Endothelial cell of umbilical vein (primary cell): ENCODE measurements at regions of chr11 and their contacts with region 1.

Region 1: GRCh38 chr11:72471005-72471898 is 36.9 kb upstream of the CLPB start:
- DNase-seq: peak; percentile 72
- H3K4me3 ChIP-seq: no peak overlapping the region
- H3K27ac ChIP-seq: no peak overlapping the region
- H3K4me1 ChIP-seq: no peaks in the 10 kb centered on the region
- H3K27me3 ChIP-seq: peaks cover 18 to 31% of the 10 kb centered on the region in 2 experiments
- CTCF ChIP-seq: peak; percentile 84 to 85
- POLR2A ChIP-seq: no peak

Region 2: GRCh38 chr11:71971680-71972079 is 499.6 kb before region 1 on chr11:
- CTCF ChIA-PET with region 1: no interaction called
- POLR2A ChIA-PET with region 1: no interaction called
- dilution Hi-C with region 1: no loop called
- intact Hi-C with region 1: no loop called
- DNase-seq: no peak
- H3K4me3 ChIP-seq: no peak overlapping the region
- H3K27ac ChIP-seq: no peak overlapping the region
- H3K4me1 ChIP-seq: no peaks in the 10 kb centered on the region
- H3K27me3 ChIP-seq: no peaks in the 10 kb centered on the region
- CTCF ChIP-seq: no peak
- POLR2A ChIP-seq: no peak

Region 3: DNA sequence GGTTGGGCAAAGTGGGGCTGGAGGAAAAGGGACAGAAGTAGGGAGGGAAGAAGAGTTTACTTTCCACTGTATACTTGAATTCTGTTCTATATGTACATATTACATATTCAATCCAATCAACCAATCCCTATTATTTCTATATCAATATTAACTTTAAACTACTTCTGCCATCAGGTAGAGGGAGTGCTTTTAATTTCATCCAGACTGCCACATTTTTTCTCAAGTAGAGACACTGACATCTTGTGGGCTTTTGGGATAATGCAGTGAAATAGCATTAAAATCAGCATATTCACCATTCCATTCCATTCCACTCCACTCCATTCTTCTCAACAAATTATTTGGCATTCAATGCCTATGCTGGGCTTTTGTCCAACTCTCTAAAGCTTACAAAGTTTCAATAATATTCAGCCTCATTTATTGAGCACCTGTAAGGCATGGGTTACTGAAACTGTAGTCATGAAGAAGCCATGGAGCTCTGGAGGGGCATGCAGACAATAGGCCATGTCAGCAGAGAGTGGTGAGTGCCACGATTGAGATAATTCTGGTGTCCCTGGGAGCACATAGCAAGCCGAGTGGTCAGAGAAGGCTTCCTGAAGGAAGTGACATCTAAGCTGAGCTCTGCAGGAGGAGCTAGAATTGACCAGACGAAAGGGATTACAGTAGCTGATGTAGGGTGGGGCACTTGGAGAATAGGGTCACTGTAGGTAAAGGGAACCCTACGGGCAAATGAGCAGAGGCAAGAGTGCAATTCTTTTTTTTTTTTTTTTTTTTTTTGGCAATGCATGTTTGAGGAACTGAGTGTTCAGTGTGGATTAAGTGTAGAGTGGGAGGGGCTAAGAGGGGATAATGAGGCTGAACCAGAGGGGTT is 24.1 kb before region 1 on chr11:
- CTCF ChIA-PET with region 1: interaction called, 41 read pairs
- POLR2A ChIA-PET with region 1: no interaction called
- dilution Hi-C with region 1: no loop called
- intact Hi-C with region 1: no loop called
- DNase-seq: peak; percentile 70
- H3K4me3 ChIP-seq: no peak overlapping the region
- H3K27ac ChIP-seq: no peak overlapping the region
- H3K4me1 ChIP-seq: no peaks in the 10 kb centered on the region
- H3K27me3 ChIP-seq: peaks cover 7 to 9% of the 10 kb centered on the region in 2 experiments
- CTCF ChIP-seq: peak; percentile 38 to 58
- POLR2A ChIP-seq: no peak

Region 4: DNA sequence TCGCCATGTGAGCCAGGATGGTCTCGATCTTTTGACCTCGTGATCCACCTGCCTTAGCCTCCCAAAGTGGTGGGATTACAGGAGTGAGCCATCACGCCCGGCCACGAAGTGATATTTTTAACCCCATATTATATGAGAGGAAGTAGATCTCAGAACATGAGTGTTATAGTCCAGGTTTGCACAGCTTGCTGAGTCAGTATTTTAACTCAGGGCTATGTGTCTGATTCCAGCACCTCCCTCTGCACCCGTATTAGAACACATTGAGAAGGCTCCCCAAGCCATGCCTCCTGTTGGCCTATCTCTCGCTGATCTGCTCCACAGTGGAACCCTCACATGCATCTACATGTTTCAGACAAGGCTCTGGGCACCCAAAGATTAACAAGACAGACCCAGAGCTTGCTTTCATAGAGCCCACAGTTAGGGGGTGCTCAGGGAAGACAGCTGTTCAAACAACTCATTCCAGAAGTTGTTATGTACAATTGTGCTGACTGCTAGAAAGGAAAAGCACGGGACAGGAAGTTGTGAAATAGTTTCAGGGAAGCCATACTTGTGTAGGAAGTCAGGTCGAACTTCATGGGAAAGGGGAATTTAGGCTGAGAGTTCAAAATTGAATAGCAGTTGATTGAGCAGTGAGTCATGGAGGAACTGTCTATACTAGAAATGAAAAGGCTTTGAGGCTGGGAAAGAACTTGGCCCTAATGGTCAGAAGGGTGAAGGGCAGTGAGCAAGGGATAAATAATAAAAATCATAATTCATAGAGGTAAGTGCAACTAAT is 12.3 kb after region 1 on chr11:
- CTCF ChIA-PET with region 1: interaction called, 17 read pairs
- POLR2A ChIA-PET with region 1: no interaction called
- dilution Hi-C with region 1: no loop called
- intact Hi-C with region 1: no loop called
- DNase-seq: peak; percentile 92
- H3K4me3 ChIP-seq: no peak overlapping the region
- H3K27ac ChIP-seq: peak overlapping the region; percentile 55
- H3K4me1 ChIP-seq: peaks cover 10% of the 10 kb centered on the region
- H3K27me3 ChIP-seq: peaks cover 10 to 11% of the 10 kb centered on the region in 2 experiments
- CTCF ChIP-seq: no peak
- POLR2A ChIP-seq: no peak

Region 5: GRCh38 chr11:72519220-72519881 is 48.1 kb after region 1 on chr11:
- CTCF ChIA-PET with region 1: interaction called, 13 read pairs
- POLR2A ChIA-PET with region 1: no interaction called
- dilution Hi-C with region 1: no loop called
- intact Hi-C with region 1: no loop called
- DNase-seq: no peak
- H3K4me3 ChIP-seq: no peak overlapping the region
- H3K27ac ChIP-seq: no peak overlapping the region
- H3K4me1 ChIP-seq: no peaks in the 10 kb centered on the region
- H3K27me3 ChIP-seq: peaks cover 8 to 17% of the 10 kb centered on the region in 2 experiments
- CTCF ChIP-seq: no peak
- POLR2A ChIP-seq: no peak

Region 6: DNA sequence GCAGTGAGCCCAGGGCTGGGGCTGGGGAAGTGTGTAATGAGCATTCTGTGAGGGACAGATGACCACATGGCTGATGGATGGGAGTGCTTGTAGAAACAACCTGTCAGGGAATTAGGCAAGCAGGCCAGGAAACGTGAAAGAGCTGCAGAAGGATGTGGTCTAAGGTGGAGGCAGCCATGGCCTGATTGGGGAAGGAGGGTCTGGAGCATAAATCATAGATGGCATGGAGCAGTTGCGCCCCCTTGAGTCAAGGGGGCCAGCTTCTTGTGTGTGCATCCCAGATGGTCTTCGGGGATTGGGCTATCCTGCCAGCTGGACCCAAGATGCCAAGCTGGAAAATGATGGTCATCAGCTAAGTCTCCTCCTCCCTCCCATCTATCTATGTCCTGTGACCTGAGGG is 82.5 kb after region 1 on chr11:
- CTCF ChIA-PET with region 1: interaction called, 53 read pairs
- POLR2A ChIA-PET with region 1: no interaction called
- dilution Hi-C with region 1: no loop called
- intact Hi-C with region 1: loop called (anchors 1 kb)
- DNase-seq: no peak
- H3K4me3 ChIP-seq: no peak overlapping the region
- H3K27ac ChIP-seq: no peak overlapping the region
- H3K4me1 ChIP-seq: no peaks in the 10 kb centered on the region
- H3K27me3 ChIP-seq: peaks cover 9 to 12% of the 10 kb centered on the region in 2 experiments
- CTCF ChIP-seq: peak; percentile 19 to 33
- POLR2A ChIP-seq: no peak

Region 7: DNA sequence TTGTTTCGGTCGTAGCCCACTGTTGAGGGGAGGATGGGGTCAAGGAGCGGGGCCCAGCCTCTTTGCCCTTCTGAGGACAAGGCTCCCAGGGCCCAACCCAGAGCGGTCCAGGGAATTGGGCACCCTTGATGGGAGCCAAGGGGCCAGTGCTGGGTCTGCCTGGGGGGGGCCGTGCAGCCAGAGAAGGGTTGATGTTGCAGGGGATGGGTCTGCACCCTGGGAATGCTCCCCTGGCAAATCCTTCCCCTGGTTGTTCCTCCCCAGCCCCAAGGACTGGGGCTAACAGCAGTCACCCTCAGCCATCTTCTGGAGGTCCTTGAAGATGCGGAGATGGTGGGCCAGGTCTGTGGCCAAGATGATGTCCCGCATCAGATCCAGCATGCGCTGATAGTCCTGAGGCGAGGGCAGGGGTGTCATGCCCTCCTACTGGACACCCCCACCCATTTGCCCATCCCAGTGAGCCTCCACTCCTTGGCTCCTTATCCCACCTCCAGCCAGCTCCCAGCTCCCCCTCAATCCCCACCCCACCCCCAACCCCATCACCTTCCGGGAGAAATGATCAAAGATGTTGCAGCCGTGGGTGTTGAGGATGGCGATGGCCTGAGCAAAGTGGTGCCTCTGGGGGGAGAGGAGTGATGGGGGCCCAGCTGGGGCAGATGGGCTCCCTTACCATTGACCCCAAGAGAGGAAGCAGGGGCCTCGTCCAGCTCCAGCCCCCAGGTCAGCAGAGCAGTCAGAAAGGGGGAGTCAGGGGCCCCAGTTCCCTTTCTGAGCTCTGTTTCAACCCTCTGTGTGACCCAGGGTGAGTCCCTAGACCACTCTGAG is 108.0 kb after region 1 on chr11:
- CTCF ChIA-PET with region 1: interaction called, 77 read pairs
- POLR2A ChIA-PET with region 1: no interaction called
- dilution Hi-C with region 1: no loop called
- intact Hi-C with region 1: no loop called
- DNase-seq: no peak
- H3K4me3 ChIP-seq: no peak overlapping the region
- H3K27ac ChIP-seq: no peak overlapping the region
- H3K4me1 ChIP-seq: no peaks in the 10 kb centered on the region
- H3K27me3 ChIP-seq: no peaks in the 10 kb centered on the region
- CTCF ChIP-seq: no peak
- POLR2A ChIP-seq: no peak

Region 8: GRCh38 chr11:72683782-72684200 is 212.5 kb after region 1 on chr11:
- CTCF ChIA-PET with region 1: interaction called, 138 read pairs
- POLR2A ChIA-PET with region 1: no interaction called
- dilution Hi-C with region 1: no loop called
- intact Hi-C with region 1: loop called (anchors 1 kb)
- DNase-seq: peak; percentile 54
- H3K4me3 ChIP-seq: no peak overlapping the region
- H3K27ac ChIP-seq: no peak overlapping the region
- H3K4me1 ChIP-seq: no peaks in the 10 kb centered on the region
- H3K27me3 ChIP-seq: peaks cover 0 to 2% of the 10 kb centered on the region in 2 experiments
- CTCF ChIP-seq: peak; percentile 97
- POLR2A ChIP-seq: no peak